ENCODE measurements at regions of chr12 and their contacts with region 1.

Region 1: DNA sequence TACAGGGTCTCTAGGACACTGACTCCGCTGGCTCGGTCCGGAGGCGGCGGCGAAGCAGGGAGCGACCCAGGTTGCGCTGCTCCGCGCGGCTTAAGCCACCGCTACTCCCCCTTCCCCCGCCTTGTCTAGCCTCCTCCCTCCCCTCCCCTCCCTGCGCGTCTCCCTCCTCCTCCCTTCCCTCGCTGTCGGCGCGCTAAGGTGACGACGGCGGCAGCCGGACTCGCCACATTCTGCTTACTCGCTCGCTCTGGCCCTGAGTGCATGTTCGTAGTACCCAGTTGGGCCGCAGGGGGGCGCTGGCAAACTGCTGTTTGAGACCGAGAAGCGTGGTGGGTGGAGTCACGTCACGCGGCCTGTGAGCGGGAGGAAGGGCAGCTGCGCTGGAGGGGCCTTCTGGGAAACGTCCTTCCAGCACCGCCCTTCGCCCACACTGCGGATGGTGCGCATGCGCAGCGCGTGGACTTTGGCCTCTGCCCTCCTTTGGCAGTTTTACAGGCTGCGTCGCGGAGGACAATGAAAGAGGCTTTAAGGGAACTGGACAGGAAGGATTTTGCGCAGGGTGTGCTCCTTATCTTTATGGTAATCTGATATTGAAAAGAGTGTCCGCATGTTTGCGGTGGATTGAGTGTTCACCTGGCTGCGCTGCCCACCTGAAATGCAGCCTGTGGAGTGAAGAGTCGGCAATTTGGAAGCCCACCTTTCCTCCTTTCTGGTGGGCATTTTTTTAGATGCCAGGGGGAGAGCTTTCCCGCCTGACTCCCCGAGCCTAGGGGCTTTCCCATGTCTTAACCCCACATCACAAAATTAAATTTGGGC is at the start of gene SCAF11:
- DNase-seq: peak; percentile 100
- ATAC-seq: peak; percentile 96
- H3K4me3 ChIP-seq: peak within 1 kb of the TSS; percentile 53 to 88
- H3K27ac ChIP-seq: peak within 1 kb of the TSS; percentile 84 to 87
- H3K4me1 ChIP-seq: peaks cover 0 to 5% of the 10 kb centered on the region in 2 donors
- H3K27me3 ChIP-seq: no peaks in the 10 kb centered on the region
- total RNA-seq, gene SCAF11: 146 to 167 TPM

Region 2: DNA sequence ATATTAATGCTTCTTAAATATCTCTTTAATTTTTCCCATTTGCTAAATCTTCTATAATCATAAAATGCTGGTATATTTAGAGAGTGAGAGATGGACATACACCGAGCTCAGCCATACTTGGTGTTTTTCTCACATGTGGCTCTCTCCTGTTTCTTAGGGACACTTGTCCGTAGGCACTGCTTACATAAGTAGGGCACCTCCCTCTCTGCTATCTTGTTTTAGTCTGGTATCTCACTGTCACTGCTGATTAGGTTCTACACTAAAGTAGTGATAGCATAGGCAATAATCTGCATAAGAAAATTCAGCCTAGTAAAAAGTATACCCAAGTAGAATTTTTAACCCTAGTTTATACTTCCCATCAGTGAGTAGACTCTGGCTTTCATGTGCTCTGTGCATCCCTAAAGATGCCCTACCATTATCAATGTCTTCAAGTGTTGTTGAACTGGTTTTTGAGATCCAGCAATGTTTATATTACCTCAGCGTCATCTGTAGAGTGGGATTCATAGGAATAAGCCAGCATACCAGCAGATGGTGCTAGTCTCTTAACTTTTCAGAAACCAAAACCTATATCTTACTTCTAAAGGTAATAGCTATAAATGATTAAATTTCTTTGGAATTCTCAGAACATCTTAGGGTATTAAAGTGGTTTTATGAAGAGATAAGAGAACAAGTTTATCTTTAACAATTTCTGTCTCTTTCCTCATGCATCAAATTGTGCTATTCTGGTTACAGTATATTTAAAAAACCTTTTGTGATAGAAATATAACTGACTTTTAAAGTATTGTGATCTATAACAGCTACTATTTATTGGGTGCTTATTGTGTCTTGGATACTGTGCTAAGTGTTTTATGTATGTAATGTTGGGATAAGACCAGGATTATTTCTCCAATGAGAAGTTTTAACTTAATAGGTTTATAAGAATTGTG is 228.2 kb before region 1 on chr12:
- intact Hi-C with region 1: loop called in 1 of 2 experiments (anchors 10 kb)
- DNase-seq: no peak
- ATAC-seq: peak; percentile 11
- H3K4me3 ChIP-seq: no peak overlapping the region
- H3K27ac ChIP-seq: no peak overlapping the region
- H3K4me1 ChIP-seq: peaks cover 0 to 1% of the 10 kb centered on the region in 2 donors
- H3K27me3 ChIP-seq: no peaks in the 10 kb centered on the region

Region 3: GRCh38 chr12:45893240-45893639 is 97.4 kb before region 1 on chr12:
- intact Hi-C with region 1: no loop called
- DNase-seq: no peak
- ATAC-seq: no peak
- H3K4me3 ChIP-seq: no peak overlapping the region
- H3K27ac ChIP-seq: no peak overlapping the region
- H3K4me1 ChIP-seq: no peaks in the 10 kb centered on the region
- H3K27me3 ChIP-seq: no peaks in the 10 kb centered on the region

Region 4: GRCh38 chr12:45933504-45933903 is 57.2 kb before region 1 on chr12:
- intact Hi-C with region 1: loop called in 1 of 2 experiments (anchors 5 kb)
- DNase-seq: no peak
- ATAC-seq: peak; percentile 7
- H3K4me3 ChIP-seq: no peak overlapping the region
- H3K27ac ChIP-seq: peak overlapping the region in 1 of 2 donors; percentile 67
- H3K4me1 ChIP-seq: peaks cover 3 to 5% of the 10 kb centered on the region in 2 donors
- H3K27me3 ChIP-seq: no peaks in the 10 kb centered on the region

Region 5: DNA sequence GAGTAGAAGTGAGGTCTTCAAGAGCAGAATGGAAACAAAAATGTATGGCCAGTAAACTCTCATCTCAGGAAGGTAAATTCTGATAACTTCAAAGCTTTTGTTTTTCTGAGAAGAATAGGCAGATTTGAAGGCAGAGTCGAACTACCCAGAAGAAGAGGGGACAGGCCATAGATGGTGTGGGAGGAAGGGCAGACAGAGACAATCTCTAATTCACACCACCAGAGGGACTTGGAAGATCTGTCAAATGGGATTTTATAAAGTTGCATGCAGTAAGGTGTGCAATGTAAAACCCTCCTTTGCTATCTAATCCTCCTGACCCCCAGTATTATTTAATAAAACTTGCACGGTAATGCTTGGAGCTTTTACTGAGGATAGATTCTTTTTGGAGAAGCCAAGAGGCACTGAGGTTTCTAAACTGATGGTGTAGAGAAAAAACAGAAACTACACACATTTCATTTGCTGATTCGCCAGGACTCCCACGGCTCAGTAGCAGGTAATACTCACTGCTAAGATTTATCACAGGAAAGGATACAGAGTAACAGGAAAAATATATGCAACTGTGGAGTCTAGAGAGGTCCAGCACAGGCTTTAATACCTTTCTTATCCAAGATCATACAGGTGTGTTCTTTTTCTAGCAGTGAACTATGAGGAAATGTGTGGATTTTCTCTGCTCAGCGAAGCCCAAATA is 363.6 kb after region 1 on chr12:
- intact Hi-C with region 1: loop called in 1 of 2 experiments (anchors 5 kb)
- DNase-seq: no peak
- ATAC-seq: no peak
- H3K4me3 ChIP-seq: no peak overlapping the region
- H3K27ac ChIP-seq: peak overlapping the region in 1 of 2 donors; percentile 5
- H3K4me1 ChIP-seq: peaks cover 4 to 5% of the 10 kb centered on the region in 2 donors
- H3K27me3 ChIP-seq: no peaks in the 10 kb centered on the region

Measured in aorta (tissue), 5 donors.